ENCODE measurements at regions of chr3 and their contacts with region 1.

Region 1: DNA sequence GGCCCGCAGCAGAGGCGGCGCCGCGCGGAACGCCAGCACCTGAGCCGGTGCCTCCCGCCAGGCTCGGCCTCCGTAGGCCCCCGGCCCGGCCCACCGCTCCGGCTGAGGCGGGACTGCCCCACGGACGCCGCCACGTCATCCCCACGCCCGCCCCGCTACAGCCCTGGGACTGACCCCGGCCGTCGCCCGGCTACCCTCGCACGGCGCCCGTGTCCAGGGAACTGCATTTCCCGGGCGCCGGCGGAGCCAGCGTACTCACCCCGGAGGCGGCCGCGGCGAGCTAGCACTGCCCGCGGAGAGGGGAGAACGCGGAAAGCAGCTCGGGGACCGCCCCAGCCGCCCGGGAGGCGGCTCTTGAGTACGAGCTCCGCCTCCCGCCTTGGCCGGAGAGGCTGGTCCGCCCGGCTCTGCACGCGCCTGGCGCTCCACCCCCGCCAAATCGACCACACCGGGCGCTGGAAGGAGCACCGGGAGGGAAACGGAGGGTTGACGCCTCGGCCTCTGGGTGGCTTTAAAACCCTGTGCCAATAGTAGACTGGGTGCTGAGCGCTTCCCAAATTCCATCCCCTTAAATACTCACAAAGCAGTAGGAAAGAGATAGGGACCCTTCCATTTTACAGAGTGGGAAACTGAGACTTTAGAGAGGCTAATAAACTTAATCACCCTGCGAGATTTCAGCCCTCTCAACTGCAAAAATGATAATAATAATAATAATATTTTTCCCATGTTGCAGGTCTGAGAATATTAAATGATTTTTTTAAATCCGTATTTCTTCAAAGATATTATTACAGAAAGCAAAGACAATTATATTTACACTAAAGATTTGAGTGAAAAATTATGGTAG is at the start of gene B4GALT4:
- DNase-seq: peak; percentile 90
- ATAC-seq: peak; percentile 94
- H3K4me3 Mint-ChIP-seq: peak within 1 kb of the TSS; percentile 85
- H3K27ac Mint-ChIP-seq: peak within 1 kb of the TSS; percentile 91
- H3K4me1 Mint-ChIP-seq: peaks cover 13% of the 10 kb centered on the region
- H3K27me3 Mint-ChIP-seq: no peaks in the 10 kb centered on the region
- CTCF ChIP-seq: no peak
- total RNA-seq, gene B4GALT4: 32.0 to 37.7 TPM (median 32.9 TPM) in 3 replicates

Region 2: DNA sequence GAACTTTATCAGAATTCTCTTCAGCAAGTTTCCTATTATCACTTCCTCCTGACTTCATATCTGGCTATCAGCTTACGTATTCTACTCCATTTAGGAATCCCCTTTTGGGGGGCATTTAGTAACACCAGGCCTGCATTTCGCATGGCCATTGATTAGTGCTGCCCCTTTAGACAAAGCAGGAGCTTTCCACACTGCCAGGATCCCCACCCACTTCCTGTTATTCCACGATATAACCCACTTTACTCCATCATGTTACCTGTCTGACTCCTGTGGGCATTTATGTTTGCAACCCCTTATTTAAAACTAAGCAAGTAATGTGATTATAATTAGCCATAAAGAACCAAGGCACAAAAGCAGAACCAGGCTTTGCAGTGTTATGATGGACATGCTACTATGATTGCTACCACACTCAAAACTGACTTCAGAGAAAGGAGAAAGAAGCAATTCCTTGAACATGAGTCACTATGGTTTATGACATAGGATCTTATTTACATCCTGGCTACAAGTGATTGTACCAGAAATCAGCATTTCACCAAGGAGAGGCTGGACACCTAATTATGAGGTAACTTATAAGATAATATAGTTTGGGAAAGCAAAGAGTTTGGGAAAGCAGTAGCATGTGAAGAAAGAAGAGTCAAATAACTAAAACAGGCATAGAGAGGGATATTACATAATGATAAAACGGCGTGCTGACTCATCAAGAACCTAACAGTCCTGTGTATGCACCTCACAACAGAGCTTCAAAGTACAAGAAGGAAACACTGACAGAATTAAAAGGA is 302.4 kb before region 1 on chr3:
- CTCF ChIA-PET with region 1: no interaction called
- POLR2A ChIA-PET with region 1: no interaction called
- DNase-seq: no peak
- ATAC-seq: no peak
- H3K4me3 Mint-ChIP-seq: no peak overlapping the region
- H3K27ac Mint-ChIP-seq: no peak overlapping the region
- H3K4me1 Mint-ChIP-seq: 0 out of 2 replicates have a peak, but pooled peaks cover 4% of the 10 kb centered on the region
- H3K27me3 Mint-ChIP-seq: no peaks in the 10 kb centered on the region
- CTCF ChIP-seq: no peak

Region 3: DNA sequence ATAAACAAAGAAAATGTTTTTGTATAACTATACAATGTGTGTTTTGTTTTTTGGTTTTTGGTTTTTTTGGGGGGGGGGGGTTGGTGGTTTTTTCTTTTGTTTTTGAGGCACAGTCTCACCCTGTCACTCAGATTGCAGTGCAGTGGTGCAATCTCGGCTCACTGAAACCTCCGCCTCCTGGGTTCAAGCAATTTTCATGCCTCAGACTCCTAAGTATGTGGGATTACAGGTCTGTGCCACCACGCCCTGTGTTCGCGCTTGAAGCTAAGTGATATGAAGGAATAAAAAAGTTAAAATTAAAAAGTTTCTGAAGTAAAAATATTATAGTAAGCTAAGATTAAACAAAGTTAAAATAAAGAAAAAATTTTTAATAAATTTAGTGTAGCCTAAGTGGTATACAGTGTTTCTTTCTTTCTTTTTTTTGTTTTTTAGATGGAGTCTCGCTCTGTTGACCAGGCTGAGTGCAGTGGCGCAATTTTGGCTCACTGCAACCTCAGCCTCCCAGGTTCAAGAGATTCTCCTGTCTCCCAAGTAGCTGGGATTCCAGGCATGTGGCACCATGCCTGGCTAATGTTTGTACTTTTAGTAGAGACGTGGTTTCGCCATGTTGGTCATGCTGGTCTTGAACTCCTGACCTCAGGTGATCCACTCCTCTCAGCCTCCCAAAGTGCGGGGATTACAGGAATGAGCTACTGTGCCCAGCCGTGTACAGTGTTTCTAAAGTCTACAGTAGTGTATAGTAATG is 148.7 kb before region 1 on chr3:
- CTCF ChIA-PET with region 1: no interaction called
- POLR2A ChIA-PET with region 1: no interaction called
- DNase-seq: no peak
- ATAC-seq: no peak
- H3K4me3 Mint-ChIP-seq: no peak overlapping the region
- H3K27ac Mint-ChIP-seq: no peak overlapping the region
- H3K4me1 Mint-ChIP-seq: no peaks in the 10 kb centered on the region
- H3K27me3 Mint-ChIP-seq: no peaks in the 10 kb centered on the region
- CTCF ChIP-seq: no peak

Region 4: GRCh38 chr3:119122109-119122749 is 118.6 kb before region 1 on chr3:
- CTCF ChIA-PET with region 1: interaction called, 10 read pairs
- POLR2A ChIA-PET with region 1: interaction called, 3 read pairs
- DNase-seq: no peak
- ATAC-seq: peak; percentile 50
- H3K4me3 Mint-ChIP-seq: no peak overlapping the region
- H3K27ac Mint-ChIP-seq: no peak overlapping the region
- H3K4me1 Mint-ChIP-seq: peaks cover 26% of the 10 kb centered on the region
- H3K27me3 Mint-ChIP-seq: peaks cover 6% of the 10 kb centered on the region
- CTCF ChIP-seq: no peak

Region 5: GRCh38 chr3:119223511-119223910 is 17.3 kb before region 1 on chr3:
- CTCF ChIA-PET with region 1: interaction called, 16 read pairs
- POLR2A ChIA-PET with region 1: no interaction called
- DNase-seq: no peak
- ATAC-seq: peak; percentile 88
- H3K4me3 Mint-ChIP-seq: no peak overlapping the region
- H3K27ac Mint-ChIP-seq: no peak overlapping the region
- H3K4me1 Mint-ChIP-seq: no peaks in the 10 kb centered on the region
- H3K27me3 Mint-ChIP-seq: no peaks in the 10 kb centered on the region
- CTCF ChIP-seq: no peak

Region 6: DNA sequence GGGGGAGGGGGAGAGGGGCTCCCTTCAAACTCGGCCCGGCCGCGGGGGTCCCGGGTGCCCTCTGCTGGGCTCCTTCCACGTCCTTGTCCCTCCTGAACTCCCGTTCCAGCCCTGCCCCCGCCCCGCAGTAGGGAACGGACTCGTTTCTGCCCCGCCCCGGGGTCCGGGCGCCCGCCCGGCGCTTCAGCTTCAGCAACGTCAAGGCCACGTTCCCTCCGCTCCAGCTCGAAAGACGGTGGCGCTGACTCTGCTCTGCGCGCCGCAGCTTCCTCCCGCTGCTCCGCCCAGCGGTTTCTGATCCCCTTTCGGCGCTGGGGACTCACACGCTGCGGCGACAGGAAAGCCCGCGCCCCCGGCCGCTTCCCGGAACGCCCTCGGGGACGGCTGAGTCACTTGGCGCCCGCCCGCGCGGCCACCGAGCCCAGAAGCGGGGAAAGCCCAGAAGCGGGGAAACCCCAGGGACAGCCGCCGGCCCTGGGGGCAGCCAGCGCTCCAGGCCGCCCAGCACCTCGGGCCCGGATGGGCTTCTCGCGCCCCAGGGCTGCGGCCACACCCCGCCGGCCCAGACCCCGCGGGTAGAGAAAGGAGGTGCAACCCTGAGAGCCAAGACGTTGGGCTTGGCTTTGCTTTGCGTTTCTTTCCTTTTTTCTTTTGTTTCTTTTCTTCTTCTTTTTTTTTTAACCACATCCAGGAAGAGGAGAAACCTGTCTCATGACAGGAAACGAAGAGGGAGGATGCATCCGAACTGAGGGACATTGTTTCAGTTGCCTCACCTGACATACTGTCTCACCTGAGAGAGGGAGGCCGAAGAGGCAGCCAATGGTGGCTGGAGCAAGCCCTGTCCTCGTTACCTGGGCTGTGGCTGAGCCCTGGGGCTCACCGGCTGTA is 82.3 kb after region 1 on chr3:
- CTCF ChIA-PET with region 1: interaction called, 21 read pairs
- POLR2A ChIA-PET with region 1: interaction called, 6 read pairs
- DNase-seq: peak; percentile 80
- ATAC-seq: peak; percentile 71
- H3K4me3 Mint-ChIP-seq: peak overlapping the region; percentile 85
- H3K27ac Mint-ChIP-seq: peak overlapping the region; percentile 98
- H3K4me1 Mint-ChIP-seq: peaks cover 60% of the 10 kb centered on the region
- H3K27me3 Mint-ChIP-seq: no peaks in the 10 kb centered on the region
- CTCF ChIP-seq: no peak

Region 7: DNA sequence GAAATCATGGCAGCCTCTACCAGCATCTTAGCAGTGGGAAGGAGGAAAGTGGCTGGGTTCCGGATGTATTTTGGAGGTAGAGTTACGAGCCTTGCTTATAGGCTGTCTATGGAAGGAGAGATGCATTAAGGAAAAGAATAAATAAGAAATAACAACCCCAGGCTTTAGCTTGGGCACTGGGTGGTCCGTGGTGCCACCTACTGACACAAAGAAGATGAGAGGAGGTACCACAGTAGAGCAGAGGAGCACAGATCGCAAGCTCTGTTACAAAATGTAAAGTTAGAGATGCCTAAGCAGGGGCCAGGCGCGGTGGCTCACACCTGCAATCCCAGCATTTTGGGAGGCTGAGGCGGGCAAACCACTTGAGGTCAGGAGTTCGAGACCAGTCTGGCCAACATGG is 147.8 kb after region 1 on chr3:
- CTCF ChIA-PET with region 1: interaction called, 12 read pairs
- POLR2A ChIA-PET with region 1: interaction called, 4 read pairs
- DNase-seq: no peak
- ATAC-seq: peak; percentile 85
- H3K4me3 Mint-ChIP-seq: no peak overlapping the region
- H3K27ac Mint-ChIP-seq: no peak overlapping the region
- H3K4me1 Mint-ChIP-seq: peaks cover 4% of the 10 kb centered on the region; the same call in 1 of the 2 replicates
- H3K27me3 Mint-ChIP-seq: no peaks in the 10 kb centered on the region
- CTCF ChIP-seq: no peak